Natural killer cell (primary cell): ENCODE measurements at regions of chr19 and their contacts with region 1.

Region 1: DNA sequence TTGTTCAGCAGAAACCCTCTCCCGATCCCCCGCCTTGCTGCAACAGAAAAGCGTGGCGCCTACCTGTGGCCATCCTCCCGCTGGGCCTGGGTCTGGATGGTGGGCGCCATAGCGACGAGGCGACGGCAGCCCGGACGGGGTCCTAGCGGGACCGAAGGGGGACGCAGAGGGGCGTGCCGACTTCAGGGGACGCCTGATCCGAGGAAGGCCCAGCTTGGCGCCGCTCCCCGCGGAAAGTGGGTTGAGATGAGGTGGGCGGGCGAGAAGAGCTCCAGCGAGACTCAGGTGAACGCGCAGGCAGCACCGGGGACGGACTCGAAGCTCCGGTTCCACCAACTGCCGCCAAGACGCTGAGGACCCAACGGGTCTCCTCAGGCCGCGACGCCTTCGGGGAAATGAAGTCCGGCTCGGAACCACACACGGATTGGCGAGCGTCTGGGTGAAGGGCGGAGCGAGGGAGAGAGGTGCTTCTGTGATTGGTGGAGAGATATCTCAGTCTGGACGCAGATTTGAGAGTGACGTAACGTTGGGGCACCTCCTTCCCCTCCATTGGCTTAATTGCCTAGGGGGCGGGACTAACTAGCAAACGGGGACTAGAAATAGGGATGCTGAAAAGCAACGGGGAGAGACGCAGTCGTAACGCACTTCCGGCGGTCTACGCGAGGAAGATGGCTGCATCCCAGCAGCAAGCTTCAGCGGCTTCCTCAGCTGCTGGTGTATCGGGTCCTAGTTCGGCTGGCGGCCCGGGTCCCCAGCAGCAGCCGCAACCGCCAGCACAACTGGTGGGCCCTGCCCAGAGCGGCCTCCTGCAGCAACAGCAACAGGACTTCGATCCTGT is at the starts of genes MED29 and PAF1:
- DNase-seq: peak; percentile 90 to 100
- ATAC-seq: peak; percentile 91 to 98 (median 92)
- H3K4me3 ChIP-seq: peak within 1 kb of the TSS; percentile 92
- H3K4me3 Mint-ChIP-seq: peak within 1 kb of the TSS; percentile 97
- H3K27ac ChIP-seq: peak within 1 kb of the TSS; percentile 98
- H3K27ac Mint-ChIP-seq: peak within 1 kb of the TSS; percentile 91 to 98
- H3K4me1 ChIP-seq: peaks cover 25% of the 10 kb centered on the region
- H3K4me1 Mint-ChIP-seq: peaks cover 16 to 32% of the 10 kb centered on the region in 2 donors
- H3K27me3 ChIP-seq: no peaks in the 10 kb centered on the region
- H3K27me3 Mint-ChIP-seq: no peaks in the 10 kb centered on the region
- CTCF ChIP-seq: no peak
- total RNA-seq, gene MED29: 37.5 to 49.1 (median 45.9) TPM
- total RNA-seq, gene PAF1: 54.3 to 80.9 (median 68.3) TPM

Region 2: GRCh38 chr19:39341719-39342604 is 49.0 kb before region 1 on chr19 and contains the start of gene SAMD4B:
- intact Hi-C with region 1: loop called (anchors 2 kb)
- DNase-seq: peak; percentile 99
- ATAC-seq: peak; percentile 88 to 96 (median 88)
- H3K4me3 ChIP-seq: peak within 1 kb of the TSS; percentile 97
- H3K4me3 Mint-ChIP-seq: peak within 1 kb of the TSS; percentile 99
- H3K27ac ChIP-seq: peak within 1 kb of the TSS; percentile 86
- H3K27ac Mint-ChIP-seq: peak within 1 kb of the TSS; percentile 97
- H3K4me1 ChIP-seq: peaks cover 23% of the 10 kb centered on the region
- H3K4me1 Mint-ChIP-seq: peaks cover 48 to 66% of the 10 kb centered on the region in 2 donors
- H3K27me3 ChIP-seq: no peaks in the 10 kb centered on the region
- H3K27me3 Mint-ChIP-seq: no peaks in the 10 kb centered on the region
- CTCF ChIP-seq: peak; percentile 80
- total RNA-seq, gene SAMD4B: 67.8 to 80.8 (median 78.9) TPM

Region 3: GRCh38 chr19:39435499-39436349 is 44.8 kb after region 1 on chr19 and contains the start of gene RPS16:
- intact Hi-C with region 1: loop called (anchors 2 kb)
- DNase-seq: peak; percentile 99
- ATAC-seq: peak; percentile 94 to 99 (median 94)
- H3K4me3 ChIP-seq: peak within 1 kb of the TSS; percentile 76
- H3K4me3 Mint-ChIP-seq: peak within 1 kb of the TSS; percentile 99
- H3K27ac ChIP-seq: peak within 1 kb of the TSS; percentile 95
- H3K27ac Mint-ChIP-seq: peak within 1 kb of the TSS; percentile 96 to 98
- H3K4me1 ChIP-seq: peaks cover 32% of the 10 kb centered on the region
- H3K4me1 Mint-ChIP-seq: peaks cover 27 to 36% of the 10 kb centered on the region in 2 donors
- H3K27me3 ChIP-seq: no peaks in the 10 kb centered on the region
- H3K27me3 Mint-ChIP-seq: peaks cover 0 to 3% of the 10 kb centered on the region in 2 donors
- CTCF ChIP-seq: no peak
- total RNA-seq, gene RPS16: 1,227 to 1,543 (median 1,399) TPM

Region 4: DNA sequence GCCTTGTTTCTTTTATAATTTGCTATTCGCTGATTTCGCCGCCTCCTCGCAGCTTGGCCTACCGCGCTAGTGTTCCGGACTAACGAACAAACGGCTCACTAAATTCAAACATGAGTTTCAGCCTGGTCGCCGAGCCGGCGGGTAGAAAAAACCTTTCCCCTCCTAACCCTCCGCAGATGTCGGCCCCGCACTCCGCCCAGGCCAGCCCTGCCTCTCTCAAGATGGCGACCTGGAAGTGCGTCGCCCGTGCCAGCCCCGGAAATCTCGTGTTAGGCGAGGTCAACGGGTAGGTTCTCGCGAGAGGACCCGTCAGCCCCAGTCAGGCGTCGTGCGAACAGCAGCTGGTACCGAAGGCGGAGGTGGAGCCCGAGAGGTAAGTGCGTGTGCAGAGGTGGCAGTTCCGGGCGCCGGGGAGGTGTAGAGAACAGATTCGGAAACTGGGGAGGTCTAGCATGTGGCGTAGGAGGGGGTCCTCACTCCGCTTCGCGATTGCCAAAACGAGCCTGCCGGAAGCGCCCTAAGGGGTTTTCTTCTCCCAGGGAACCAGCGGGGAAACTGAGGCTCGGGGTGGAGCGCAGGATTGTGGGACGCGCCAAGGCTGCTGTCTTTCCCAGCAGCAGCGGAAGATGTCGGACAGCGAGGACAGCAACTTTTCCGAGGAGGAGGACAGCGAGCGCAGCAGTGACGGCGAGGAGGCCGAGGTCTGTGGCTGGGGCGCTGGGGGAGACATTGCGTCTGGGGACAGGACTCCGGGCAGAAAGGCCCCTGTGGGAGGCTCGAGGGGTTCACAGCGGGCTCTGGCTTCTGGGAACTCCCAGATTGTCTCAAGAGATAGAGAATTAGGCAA is 54.5 kb after region 1 on chr19 and contains the start of gene SUPT5H:
- intact Hi-C with region 1: loop called (anchors 2 kb)
- DNase-seq: peak; percentile 96 to 100
- ATAC-seq: peak; percentile 93 to 98 (median 95)
- H3K4me3 ChIP-seq: peak within 1 kb of the TSS; percentile 99
- H3K4me3 Mint-ChIP-seq: peak within 1 kb of the TSS; percentile 98
- H3K27ac ChIP-seq: peak within 1 kb of the TSS; percentile 99
- H3K27ac Mint-ChIP-seq: peak within 1 kb of the TSS; percentile 97 to 100
- H3K4me1 ChIP-seq: peaks cover 56% of the 10 kb centered on the region
- H3K4me1 Mint-ChIP-seq: peaks cover 41 to 54% of the 10 kb centered on the region in 2 donors
- H3K27me3 ChIP-seq: no peaks in the 10 kb centered on the region
- H3K27me3 Mint-ChIP-seq: no peaks in the 10 kb centered on the region
- CTCF ChIP-seq: no peak
- total RNA-seq, gene SUPT5H: 228 to 256 (median 230) TPM